ENCODE measurements at regions of chr7 and their contacts with region 1.

Region 1: GRCh38 chr7:76179686-76180085 is 22.0 kb upstream of the SRRM3 start:
- DNase-seq: no peak
- ATAC-seq: no peak
- H3K4me3 ChIP-seq: no peak overlapping the region
- H3K27ac ChIP-seq: no peak overlapping the region
- H3K4me1 ChIP-seq: no peaks in the 10 kb centered on the region
- H3K27me3 ChIP-seq: no peaks in the 10 kb centered on the region
- CTCF ChIP-seq: no peak

Region 2: GRCh38 chr7:76108540-76109241 is 71.0 kb before region 1 on chr7:
- intact Hi-C with region 1: no loop called
- DNase-seq: peak; percentile 69
- ATAC-seq: peak; percentile 94
- H3K4me3 ChIP-seq: no peak overlapping the region
- H3K27ac ChIP-seq: no peak overlapping the region
- H3K4me1 ChIP-seq: no peaks in the 10 kb centered on the region
- H3K27me3 ChIP-seq: no peaks in the 10 kb centered on the region
- CTCF ChIP-seq: no peak

Region 3: GRCh38 chr7:76121044-76121443 is 58.6 kb before region 1 on chr7:
- intact Hi-C with region 1: no loop called
- DNase-seq: no peak
- ATAC-seq: no peak
- H3K4me3 ChIP-seq: no peak overlapping the region
- H3K27ac ChIP-seq: no peak overlapping the region
- H3K4me1 ChIP-seq: no peaks in the 10 kb centered on the region
- H3K27me3 ChIP-seq: no peaks in the 10 kb centered on the region
- CTCF ChIP-seq: no peak

Region 4: GRCh38 chr7:76262683-76263402 is 83.2 kb after region 1 on chr7:
- intact Hi-C with region 1: loop called (anchors 5 kb)
- DNase-seq: no peak
- ATAC-seq: peak; percentile 82
- H3K4me3 ChIP-seq: no peak overlapping the region
- H3K27ac ChIP-seq: no peak overlapping the region
- H3K4me1 ChIP-seq: peaks cover 13% of the 10 kb centered on the region
- H3K27me3 ChIP-seq: peaks cover 24% of the 10 kb centered on the region
- CTCF ChIP-seq: peak; percentile 65

Region 5: DNA sequence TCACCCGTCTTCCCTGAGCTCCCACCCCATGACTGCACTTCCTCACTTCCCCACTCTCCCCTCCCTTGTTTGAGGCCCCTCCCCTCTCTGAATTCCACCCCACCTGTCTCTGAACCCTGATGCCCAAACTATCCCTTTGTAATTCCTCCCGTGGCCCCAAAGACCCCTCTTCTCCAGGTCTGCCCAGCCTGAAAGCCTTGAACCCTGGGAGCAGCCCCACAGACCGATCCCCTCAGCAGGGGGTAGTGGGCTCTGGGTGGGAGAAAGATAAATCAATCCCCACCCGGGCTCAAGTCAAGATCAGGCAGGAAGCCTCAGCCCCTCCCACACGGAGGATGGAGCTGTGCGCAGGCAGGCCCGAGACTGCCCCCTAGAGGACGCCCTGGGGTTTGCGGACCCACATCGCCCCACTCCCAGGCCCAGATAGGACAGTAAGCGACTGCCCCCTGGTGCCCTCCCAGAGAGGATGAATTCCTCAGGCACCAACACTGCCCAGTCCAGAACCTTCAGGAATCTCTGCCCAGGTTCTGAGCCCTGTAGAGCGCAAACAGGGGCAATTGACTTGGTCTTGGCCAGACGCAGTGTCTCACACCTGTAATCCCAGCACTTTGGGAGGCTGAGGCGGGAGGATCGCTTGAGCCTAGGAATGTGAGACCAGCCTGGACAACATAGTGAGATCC is 134.5 kb after region 1 on chr7:
- intact Hi-C with region 1: loop called (anchors 10 kb)
- DNase-seq: peak; percentile 97
- ATAC-seq: peak; percentile 92
- H3K4me3 ChIP-seq: no peak overlapping the region
- H3K27ac ChIP-seq: no peak overlapping the region
- H3K4me1 ChIP-seq: peaks cover 15% of the 10 kb centered on the region
- H3K27me3 ChIP-seq: no peaks in the 10 kb centered on the region
- CTCF ChIP-seq: peak; percentile 100

Measured in upper lobe of right lung (tissue), 1 donor.